Uterus (tissue), 4 donors: ENCODE measurements at regions of chr18 and their contacts with region 1.

Region 1: DNA sequence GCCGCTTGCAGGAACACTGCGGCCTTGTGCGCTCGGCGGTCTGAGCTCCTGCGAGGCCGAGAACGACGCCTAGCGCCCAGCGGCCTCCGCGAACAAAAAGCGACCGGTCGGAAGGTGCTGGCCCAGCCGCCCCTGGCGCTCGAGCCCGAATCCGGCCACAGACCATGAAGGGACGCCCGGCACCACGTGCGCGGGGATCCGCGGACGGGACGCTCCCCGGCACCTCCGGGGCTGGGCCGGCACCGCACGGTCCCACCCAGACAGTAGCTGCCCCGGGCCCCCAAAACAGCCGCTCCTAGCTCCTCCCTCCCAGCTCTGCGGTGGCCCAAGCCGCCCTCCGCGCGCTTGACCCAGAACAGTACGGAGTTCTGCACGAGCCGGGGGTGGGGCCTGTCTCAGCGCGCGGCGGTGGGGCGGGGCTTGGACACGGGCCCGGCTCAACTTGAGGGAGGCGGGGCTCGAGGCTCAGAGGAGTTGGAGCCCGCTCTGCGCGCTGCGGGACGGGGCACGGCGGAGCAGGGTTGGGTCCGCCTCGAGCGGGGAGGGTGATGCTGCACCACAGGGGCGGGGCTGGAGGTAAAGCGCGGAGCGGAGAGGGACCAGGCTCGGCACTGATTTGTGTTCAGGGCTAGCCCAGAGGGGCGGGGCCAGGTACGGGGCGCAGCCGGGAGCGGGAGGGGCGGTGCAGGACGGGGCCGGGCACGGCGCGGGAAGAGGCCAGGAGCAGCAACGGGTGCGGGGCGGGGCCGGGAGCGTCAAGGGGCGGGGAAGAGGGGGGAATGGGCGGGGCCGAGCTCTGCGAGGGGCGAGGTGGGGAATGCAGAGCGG is 538 bp upstream of the IMPA2 start:
- DNase-seq: peak; percentile 99
- H3K4me3 ChIP-seq: peak overlapping the region; percentile 68 to 74
- H3K27ac ChIP-seq: peak overlapping the region; percentile 94 to 97
- H3K4me1 ChIP-seq: peaks cover 0 to 4% of the 10 kb centered on the region in 2 donors
- H3K27me3 ChIP-seq: no peaks in the 10 kb centered on the region
- CTCF ChIP-seq: peak in 2 of 4 experiments; percentile 17 to 38
- POLR2A ChIP-seq: peak; percentile 72 to 92

Region 2: DNA sequence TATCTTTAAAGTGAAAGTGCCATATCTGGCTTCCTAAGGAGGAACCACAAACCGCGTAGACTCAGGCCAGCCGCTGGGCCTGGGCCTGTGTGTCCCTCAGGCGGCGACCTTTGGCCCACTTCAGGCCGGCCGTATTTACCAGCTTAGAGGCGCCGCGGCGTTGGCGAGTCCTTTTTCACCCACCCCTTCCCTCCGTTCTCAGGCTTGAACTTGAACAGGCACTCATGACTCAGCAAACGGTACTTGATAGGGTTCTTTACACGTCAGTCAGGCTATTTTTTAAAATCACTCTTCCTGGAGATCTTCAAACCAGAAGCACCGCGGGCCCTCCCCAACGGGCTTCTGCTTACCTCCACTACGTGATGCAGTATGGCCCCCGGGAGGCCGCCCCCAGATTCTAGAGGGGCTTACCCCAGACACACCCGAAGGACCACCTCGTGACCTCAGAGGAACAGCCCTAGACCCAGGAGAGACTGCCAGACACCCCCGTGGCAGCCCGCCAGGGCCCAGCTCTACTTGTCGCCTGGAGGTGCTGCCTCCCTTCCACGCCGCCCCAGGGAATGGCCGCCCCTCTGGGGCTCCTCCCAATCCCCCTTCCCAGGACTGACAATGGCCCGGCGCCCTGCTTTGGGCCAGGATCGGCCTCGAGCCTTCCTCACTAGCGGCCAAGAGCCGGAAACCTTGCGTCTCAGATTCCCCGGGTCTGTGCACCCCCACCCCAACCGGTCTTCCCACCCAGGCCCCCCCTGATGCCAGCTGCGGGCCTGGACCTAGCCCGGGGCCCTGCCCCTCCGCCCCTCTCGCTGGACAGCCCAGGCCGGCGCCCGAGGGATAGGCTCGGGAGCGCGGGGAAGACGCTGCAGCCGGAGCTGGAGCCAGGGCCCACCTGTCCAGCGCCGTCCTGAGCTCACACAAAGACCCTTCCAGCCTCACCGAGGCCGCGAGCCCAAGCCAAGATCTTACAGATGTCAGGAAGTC is 33.3 kb before region 1 on chr18:
- intact Hi-C with region 1: loop called (anchors 2 kb)
- DNase-seq: peak; percentile 91 to 96
- H3K4me3 ChIP-seq: peak overlapping the region; percentile 44 to 54
- H3K27ac ChIP-seq: peak overlapping the region; percentile 92 to 96
- H3K4me1 ChIP-seq: no peaks in the 10 kb centered on the region
- H3K27me3 ChIP-seq: no peaks in the 10 kb centered on the region
- CTCF ChIP-seq: peak in 1 of 4 experiments; percentile 16
- POLR2A ChIP-seq: peak; percentile 71 to 74

Region 3: DNA sequence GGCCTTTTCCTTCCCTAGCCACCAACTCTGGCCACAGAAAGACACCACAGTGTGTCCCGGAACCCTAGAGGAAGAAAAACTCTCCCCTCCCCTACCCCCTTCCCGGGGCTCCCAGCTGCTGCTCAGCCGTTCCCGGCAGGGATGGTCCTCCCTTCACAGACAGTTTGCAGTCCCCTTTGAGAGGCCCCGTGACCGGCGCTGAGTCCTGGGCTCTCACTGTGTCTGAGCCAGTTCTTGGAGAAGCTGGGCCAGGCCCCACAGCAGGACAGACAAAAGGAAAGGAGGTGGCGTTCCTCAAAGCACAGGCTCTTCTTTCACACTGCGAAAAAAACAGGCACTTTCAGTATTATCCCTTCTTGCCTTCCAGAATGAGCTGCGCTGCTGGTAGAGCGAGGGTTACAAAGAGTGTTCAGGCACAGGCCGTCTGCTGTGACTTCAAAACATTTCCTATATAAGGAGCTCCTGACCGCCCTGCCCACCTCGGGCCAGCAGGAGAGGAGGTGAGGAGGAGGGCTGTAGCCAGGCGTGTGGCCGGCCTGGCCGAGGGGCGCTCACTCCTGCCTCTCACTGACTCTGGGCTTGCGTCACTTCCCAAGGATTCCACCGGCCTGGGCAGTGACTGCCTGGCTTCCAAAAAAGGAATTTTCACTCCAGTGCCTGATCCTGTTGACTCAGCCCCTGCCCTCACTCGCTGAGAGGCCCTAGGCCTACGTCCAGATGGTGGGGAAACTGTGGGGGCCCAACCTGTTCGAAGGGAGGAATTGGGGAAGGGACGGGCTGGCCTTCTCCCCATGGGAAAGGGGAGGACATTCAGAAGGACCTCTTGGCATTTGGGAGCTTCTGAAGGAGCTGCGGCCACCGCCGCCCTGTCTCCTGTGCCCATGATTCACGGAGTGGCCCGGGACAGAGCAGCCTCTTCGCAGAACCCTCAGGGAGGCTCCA is 298.2 kb after region 1 on chr18:
- intact Hi-C with region 1: no loop called
- DNase-seq: peak; percentile 91 to 95
- H3K4me3 ChIP-seq: peak overlapping the region; percentile 42 to 44
- H3K27ac ChIP-seq: peak overlapping the region; percentile 97 to 99
- H3K4me1 ChIP-seq: peaks cover 5 to 24% of the 10 kb centered on the region in 2 donors
- H3K27me3 ChIP-seq: no peaks in the 10 kb centered on the region
- CTCF ChIP-seq: peak; percentile 9 to 63 (median 27)
- POLR2A ChIP-seq: peak; percentile 94 to 97